ENCODE measurements at regions of chr7 and their contacts with region 1.

Region 1: DNA sequence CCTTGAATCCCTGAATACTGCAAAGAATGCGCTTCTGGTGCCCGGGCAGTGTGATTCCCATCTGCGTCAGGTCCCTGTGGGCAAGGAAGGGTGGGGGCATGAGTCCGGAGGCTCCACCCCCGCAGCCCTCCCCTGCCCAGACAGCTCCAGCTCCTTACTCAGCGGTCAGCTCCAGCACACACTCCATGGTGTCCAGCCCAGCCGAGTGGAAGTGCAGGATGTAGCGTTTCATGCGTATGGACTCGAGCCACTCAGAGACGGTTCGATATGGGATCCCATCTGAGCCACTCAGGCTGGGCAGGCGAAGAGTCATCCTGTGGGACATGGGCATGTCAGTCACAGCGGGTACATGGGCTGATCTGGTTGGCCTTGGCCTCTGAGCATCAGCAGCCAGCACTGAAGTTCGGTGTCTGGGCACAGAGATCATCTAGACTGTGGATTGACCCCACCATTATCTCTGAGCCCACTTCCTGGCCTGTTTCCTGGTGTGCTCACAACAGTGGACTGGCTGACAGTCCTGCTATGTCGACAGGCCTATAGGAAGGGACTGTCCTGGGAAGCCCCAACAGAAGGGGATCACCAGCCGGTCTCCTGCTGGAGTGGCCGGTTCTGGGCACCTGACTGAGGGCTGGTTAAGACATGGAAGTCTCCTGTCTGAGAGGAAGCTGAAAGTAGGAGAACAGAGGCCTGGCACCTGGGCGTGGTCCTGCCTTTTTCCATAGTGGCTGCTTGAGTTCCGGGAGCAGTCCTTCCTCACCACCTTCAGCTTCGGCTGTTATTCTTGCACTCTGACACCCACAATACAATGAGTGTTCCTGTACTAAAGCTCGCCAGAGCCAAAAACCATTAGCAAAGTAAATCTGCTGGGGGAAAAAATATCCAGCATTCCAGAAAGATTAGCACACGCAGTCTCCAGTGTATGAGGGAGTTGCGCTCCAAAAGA is 10.6 kb downstream of the ZYX start:
- DNase-seq: no peak
- ATAC-seq: no peak
- H3K4me3 Mint-ChIP-seq: no peak overlapping the region
- H3K27ac Mint-ChIP-seq: peak overlapping the region; percentile 57; the same call in 1 of the 2 replicates
- H3K4me1 Mint-ChIP-seq: peaks cover 9% of the 10 kb centered on the region
- H3K27me3 Mint-ChIP-seq: no peaks in the 10 kb centered on the region
- CTCF ChIP-seq: no peak

Region 2: DNA sequence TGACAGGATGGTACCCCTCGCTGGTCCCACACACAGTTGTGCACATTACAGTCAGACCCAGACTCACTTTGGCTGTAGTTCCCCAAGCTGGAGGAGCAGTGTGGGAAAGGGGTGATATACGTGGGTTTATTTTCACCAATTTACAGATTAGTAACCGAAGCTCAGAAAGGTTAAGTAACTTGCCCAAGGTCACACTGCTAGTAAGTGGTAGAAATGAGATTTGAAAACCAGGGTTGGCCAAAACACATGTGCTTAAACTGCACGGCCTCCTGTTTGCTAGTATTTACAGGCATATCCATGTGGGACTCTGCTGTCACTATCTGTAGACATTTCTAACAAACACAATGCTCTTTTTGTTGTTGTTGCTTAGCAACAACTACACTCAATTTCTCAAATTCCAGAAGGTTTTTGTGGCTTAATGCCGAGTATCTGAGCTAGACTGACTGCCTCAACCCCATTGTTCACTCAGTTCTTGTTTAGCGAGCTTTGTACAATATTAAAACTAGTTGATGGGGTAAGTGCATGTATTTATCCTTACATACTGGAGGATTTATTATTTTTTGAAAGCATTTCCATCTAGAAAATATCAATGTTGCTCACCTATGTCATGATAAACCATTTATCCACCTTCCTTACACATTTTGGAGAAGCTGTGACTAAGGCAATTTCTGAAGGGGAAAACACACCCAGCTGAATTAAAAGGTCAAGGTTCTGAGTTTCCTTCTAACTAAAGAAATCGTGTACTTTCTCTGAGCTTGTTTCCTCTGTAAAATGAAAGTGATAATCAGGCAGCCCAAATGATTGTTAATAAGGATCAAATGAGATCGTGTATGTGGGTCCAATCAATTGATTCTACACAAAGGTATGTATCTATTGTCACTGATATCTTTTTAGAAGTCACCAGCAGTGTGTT is 112.3 kb before region 1 on chr7:
- CTCF ChIA-PET with region 1: no interaction called
- POLR2A ChIA-PET with region 1: no interaction called
- DNase-seq: no peak
- ATAC-seq: no peak
- H3K4me3 Mint-ChIP-seq: no peak overlapping the region
- H3K27ac Mint-ChIP-seq: no peak overlapping the region
- H3K4me1 Mint-ChIP-seq: peaks cover 14% of the 10 kb centered on the region
- H3K27me3 Mint-ChIP-seq: peaks cover 11% of the 10 kb centered on the region
- CTCF ChIP-seq: no peak

Region 3: DNA sequence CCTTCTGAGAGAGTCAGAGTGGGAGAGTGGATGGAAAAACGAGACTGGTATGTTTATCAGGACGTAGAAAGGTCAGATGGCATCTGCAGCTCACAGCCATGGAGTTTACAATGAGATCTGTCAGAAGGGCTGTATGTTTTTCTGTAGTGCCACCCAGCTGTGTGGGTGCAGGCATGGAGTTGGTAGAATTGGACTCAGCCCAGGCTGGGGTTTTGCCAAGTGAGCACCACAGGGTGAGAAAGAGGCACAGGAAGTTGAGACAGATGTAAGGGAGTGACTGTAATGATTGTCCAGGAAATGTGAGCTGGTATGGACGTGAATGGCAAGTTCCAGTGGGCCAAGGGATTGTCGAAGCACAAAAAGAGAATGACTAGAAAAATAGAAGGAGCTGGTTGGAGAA is 19.7 kb before region 1 on chr7:
- CTCF ChIA-PET with region 1: interaction called, 12 read pairs
- POLR2A ChIA-PET with region 1: interaction called, 4 read pairs
- DNase-seq: no peak
- ATAC-seq: no peak
- H3K4me3 Mint-ChIP-seq: no peak overlapping the region
- H3K27ac Mint-ChIP-seq: peak overlapping the region; percentile 7
- H3K4me1 Mint-ChIP-seq: peaks cover 68% of the 10 kb centered on the region
- H3K27me3 Mint-ChIP-seq: no peaks in the 10 kb centered on the region; the same call in 1 of the 2 replicates
- CTCF ChIP-seq: no peak

Region 4: GRCh38 chr7:143408686-143409561 is 17.2 kb after region 1 on chr7 and contains the start of gene EPHA1:
- CTCF ChIA-PET with region 1: interaction called, 48 read pairs
- POLR2A ChIA-PET with region 1: interaction called, 62 read pairs
- DNase-seq: peak; percentile 82
- ATAC-seq: peak; percentile 68
- H3K4me3 Mint-ChIP-seq: peak within 1 kb of the TSS; percentile 91
- H3K27ac Mint-ChIP-seq: peak within 1 kb of the TSS; percentile 99
- H3K4me1 Mint-ChIP-seq: peaks cover 82% of the 10 kb centered on the region
- H3K27me3 Mint-ChIP-seq: no peaks in the 10 kb centered on the region
- CTCF ChIP-seq: peak; percentile 49
- total RNA-seq, gene EPHA1: 159 to 203 TPM (median 162 TPM) in 3 replicates